Prostate gland (tissue), 2 donors: ENCODE measurements at regions of chr19 and their contacts with region 1.

Region 1: DNA sequence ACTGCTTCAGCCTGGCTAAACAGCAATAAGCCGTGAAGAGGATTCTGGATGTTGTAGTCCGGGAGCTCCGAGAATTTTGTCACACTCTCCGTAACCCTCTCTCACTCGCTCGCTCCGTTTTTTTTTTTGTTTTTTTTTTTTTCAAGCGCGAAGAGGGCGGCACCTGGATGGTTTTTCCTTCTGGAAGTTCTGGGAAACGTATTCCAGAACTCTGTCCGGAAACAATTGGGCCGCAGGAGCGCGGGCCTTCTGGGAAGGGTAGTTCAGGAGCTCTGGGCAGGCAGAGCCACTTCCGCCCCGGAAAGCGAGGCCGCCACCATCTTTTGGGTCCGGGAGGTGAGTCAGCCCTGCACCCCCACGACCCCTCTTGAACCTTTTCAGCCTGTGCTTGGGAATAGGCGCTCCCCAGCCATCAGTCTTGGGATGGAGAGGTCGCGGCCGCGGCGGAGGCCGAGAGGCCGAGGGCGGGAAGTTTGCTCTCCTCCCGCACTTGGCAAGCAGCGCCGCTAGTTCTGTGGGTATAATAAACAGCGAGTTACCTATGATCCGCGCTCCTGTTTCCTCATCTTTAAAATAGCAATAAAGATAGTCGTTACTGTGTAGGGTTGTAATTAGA is at the start of gene ZNF227:
- DNase-seq: peak; percentile 93
- H3K4me3 ChIP-seq: peak within 1 kb of the TSS; percentile 69 to 73
- H3K27ac ChIP-seq: peak within 1 kb of the TSS; percentile 87 to 88
- H3K4me1 ChIP-seq: no peaks in the 10 kb centered on the region
- H3K27me3 ChIP-seq: no peaks in the 10 kb centered on the region
- CTCF ChIP-seq: peak in 1 of 4 experiments; percentile 0
- POLR2A ChIP-seq: peak; percentile 23
- total RNA-seq, gene ZNF227: 17.0 to 26.4 TPM

Region 2: GRCh38 chr19:44164673-44165512 is 47.5 kb before region 1 on chr19 and contains the start of gene ZNF226:
- intact Hi-C with region 1: loop called (anchors 2 kb)
- DNase-seq: peak; percentile 97
- H3K4me3 ChIP-seq: peak within 1 kb of the TSS; percentile 71 to 84
- H3K27ac ChIP-seq: peak within 1 kb of the TSS; percentile 80 to 88
- H3K4me1 ChIP-seq: peaks cover 6% of the 10 kb centered on the region
- H3K27me3 ChIP-seq: no peaks in the 10 kb centered on the region
- CTCF ChIP-seq: no peak
- POLR2A ChIP-seq: peak; percentile 55
- total RNA-seq, gene ZNF226: 35.9 to 48.4 TPM

Region 3: GRCh38 chr19:44196772-44197171 is 15.6 kb before region 1 on chr19:
- intact Hi-C with region 1: no loop called
- DNase-seq: no peak
- H3K4me3 ChIP-seq: no peak overlapping the region
- H3K27ac ChIP-seq: no peak overlapping the region
- H3K4me1 ChIP-seq: no peaks in the 10 kb centered on the region
- H3K27me3 ChIP-seq: no peaks in the 10 kb centered on the region
- CTCF ChIP-seq: no peak
- POLR2A ChIP-seq: no peak